ENCODE measurements at regions of chr17 and their contacts with region 1.

Region 1: DNA sequence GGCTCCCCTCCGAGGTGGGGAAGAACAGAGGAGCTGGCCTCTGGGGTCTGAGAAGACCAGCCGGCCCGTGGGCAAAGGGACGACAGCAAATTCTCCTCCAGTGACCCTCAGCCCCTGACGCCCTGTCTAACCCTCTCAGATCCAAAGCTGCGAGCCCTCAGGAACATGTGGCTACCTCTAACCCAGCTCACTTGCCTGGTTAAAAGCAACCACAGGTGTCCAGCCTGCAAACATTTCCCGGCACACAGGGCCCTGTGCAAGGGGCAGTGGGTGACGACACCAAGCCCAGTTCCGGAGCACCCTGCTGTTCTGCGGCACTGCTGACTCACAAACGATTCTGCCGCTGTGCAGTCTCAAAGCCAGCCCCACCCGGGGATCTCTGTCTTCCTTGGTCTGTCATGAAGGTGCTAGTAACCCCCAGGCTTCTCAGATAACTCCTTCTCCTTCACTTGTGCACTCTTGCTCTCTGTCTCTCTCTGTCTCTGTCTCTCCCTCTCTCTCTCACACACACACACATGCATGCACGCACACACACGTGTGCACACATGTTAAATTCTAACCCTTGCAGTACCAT is 23.0 kb downstream of the WNT3 start:
- DNase-seq: no peak
- ATAC-seq: no peak
- H3K4me3 ChIP-seq: no peak overlapping the region
- H3K27ac ChIP-seq: no peak overlapping the region
- H3K4me1 ChIP-seq: no peaks in the 10 kb centered on the region
- H3K27me3 ChIP-seq: peaks cover 0 to 3% of the 10 kb centered on the region in 2 experiments; a peak in 3 of 4 replicates
- CTCF ChIP-seq: no peak
- EP300 ChIP-seq: no peak
- POLR2A ChIP-seq: no peak
- RAD21 ChIP-seq: no peak

Region 2: DNA sequence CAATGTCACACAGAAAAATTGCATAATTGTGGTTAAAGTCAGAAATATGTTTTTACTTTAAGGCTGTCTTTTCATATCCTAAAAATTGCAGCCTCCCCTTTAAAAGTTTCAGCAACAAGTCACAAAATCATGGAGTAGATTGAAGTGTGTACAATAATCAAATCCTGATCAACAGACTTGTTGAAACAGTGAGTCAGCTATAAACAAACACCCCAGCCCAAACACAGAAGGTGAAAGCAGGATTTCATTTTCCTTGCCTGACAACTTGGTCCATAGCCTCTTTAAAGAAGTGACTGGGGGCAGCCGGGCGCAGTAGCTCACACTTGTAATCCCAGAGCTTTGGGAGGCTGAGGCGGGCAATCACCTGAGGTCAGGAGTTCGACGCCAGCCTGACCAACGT is 36.8 kb before region 1 on chr17:
- CTCF ChIA-PET with region 1: no interaction called
- POLR2A ChIA-PET with region 1: no interaction called
- RAD21 ChIA-PET with region 1: no interaction called
- SMC1A ChIA-PET with region 1: no interaction called
- in situ Hi-C with region 1: no loop called
- intact Hi-C with region 1: no loop called
- DNase-seq: no peak
- ATAC-seq: no peak
- H3K4me3 ChIP-seq: no peak overlapping the region
- H3K27ac ChIP-seq: no peak overlapping the region
- H3K4me1 ChIP-seq: no peaks in the 10 kb centered on the region
- H3K27me3 ChIP-seq: no peaks in the 10 kb centered on the region
- CTCF ChIP-seq: no peak
- EP300 ChIP-seq: no peak
- POLR2A ChIP-seq: no peak
- RAD21 ChIP-seq: no peak

Region 3: GRCh38 chr17:46851029-46851741 is 55.7 kb after region 1 on chr17 and contains the start of gene WNT9B:
- CTCF ChIA-PET with region 1: no interaction called
- POLR2A ChIA-PET with region 1: no interaction called
- RAD21 ChIA-PET with region 1: no interaction called
- SMC1A ChIA-PET with region 1: no interaction called
- in situ Hi-C with region 1: loop called (anchors 10 kb)
- intact Hi-C with region 1: no loop called
- DNase-seq: no peak
- ATAC-seq: no peak
- H3K4me3 ChIP-seq: no peak within 1 kb of the TSS
- H3K27ac ChIP-seq: no peak within 1 kb of the TSS
- H3K4me1 ChIP-seq: no peaks in the 10 kb centered on the region
- H3K27me3 ChIP-seq: peaks cover 14% of the 10 kb centered on the region in 2 experiments
- CTCF ChIP-seq: no peak
- EP300 ChIP-seq: no peak
- POLR2A ChIP-seq: no peak
- RAD21 ChIP-seq: no peak
- polyA plus RNA-seq, gene WNT9B: not detected

Region 4: DNA sequence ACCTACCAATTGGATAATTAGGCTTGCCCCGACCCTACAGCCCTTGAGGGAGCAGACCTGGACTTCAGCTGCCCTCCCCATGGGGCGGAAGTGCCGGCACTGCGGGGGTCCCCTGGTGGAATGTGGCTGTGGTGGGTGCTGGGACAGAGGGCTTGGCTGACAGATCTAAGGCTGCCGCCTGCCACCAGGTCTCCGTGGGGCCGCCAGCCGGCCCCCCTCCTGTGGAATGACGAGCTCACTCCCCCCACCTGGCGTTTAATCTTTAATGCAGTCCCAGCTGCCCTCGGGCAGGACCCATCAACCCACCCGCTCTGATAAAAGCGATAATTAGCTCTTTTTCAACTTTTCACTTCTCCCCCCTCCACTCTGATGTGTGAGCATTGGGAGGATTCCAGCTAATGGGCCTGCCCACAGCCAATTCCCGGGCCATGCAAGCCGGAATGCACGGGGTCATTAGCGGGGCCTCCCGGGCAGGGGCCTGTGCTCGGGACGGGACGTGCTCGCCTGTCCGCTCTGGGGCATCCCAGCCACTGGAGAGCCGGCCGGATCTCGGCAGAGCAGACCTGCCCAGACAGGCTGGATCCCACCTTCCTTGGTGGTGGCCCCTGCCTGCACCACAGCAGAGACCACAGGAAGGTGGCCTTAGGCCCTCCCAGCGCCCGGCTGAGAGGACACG is 99.1 kb after region 1 on chr17:
- CTCF ChIA-PET with region 1: no interaction called
- POLR2A ChIA-PET with region 1: no interaction called
- RAD21 ChIA-PET with region 1: no interaction called
- SMC1A ChIA-PET with region 1: no interaction called
- in situ Hi-C with region 1: loop called (anchors 10 kb)
- intact Hi-C with region 1: no loop called
- DNase-seq: no peak
- ATAC-seq: no peak
- H3K4me3 ChIP-seq: no peak overlapping the region
- H3K27ac ChIP-seq: no peak overlapping the region
- H3K4me1 ChIP-seq: no peaks in the 10 kb centered on the region
- H3K27me3 ChIP-seq: peaks cover 3% of the 10 kb centered on the region in 2 experiments; a peak in 3 of 4 replicates
- CTCF ChIP-seq: no peak
- EP300 ChIP-seq: no peak
- POLR2A ChIP-seq: no peak
- RAD21 ChIP-seq: no peak

Measured in GM12878 (cell line).